T-cell (primary cell): ENCODE measurements at regions of chr9 and their contacts with region 1.

Region 1: GRCh38 chr9:117644133-117644931 is 59.9 kb upstream of the TLR4 start:
- DNase-seq: peak in 32 of 35 experiments; percentile 1 to 55 (median 26)
- ATAC-seq: peak in 1 of 4 experiments; percentile 30
- H3K4me3 ChIP-seq: peak overlapping the region in 1 of 2 donors; percentile 3
- H3K4me3 Mint-ChIP-seq: peak overlapping the region in 1 of 3 donors; percentile 34
- H3K27ac ChIP-seq: no peak overlapping the region
- H3K27ac Mint-ChIP-seq: no peak overlapping the region
- H3K4me1 ChIP-seq: peaks cover 0 to 6% of the 10 kb centered on the region in 2 experiments
- H3K4me1 Mint-ChIP-seq: peaks cover 5 to 10% (median 9%) of the 10 kb centered on the region in 3 donors
- H3K27me3 ChIP-seq: peaks cover 5 to 9% of the 10 kb centered on the region in 2 experiments
- H3K27me3 Mint-ChIP-seq: peaks cover 18 to 42% of the 10 kb centered on the region in 2 donors

Region 2: DNA sequence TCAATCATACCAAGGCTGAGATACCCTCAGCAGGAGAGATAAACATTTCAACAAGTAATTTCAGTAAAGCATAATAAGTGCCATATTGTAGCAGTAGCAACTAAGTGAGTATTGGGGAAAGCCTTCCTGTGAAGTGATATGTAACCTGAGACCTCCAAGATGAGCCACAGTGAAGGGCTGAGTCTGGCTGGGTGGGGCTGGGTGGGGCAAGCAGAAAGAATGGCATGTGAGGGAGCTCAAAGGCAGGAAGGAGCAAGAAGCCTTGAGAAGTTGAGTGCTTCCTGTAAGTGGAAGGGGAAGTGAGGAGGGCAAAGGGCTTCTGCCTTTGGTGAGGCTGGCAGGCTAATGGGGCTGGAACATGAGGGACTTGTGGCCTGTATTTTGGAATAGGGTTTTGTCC is 209.8 kb before region 1 on chr9:
- CTCF ChIA-PET with region 1: no interaction called
- POLR2A ChIA-PET with region 1: no interaction called
- DNase-seq: no peak
- ATAC-seq: no peak
- H3K4me3 ChIP-seq: no peak overlapping the region
- H3K4me3 Mint-ChIP-seq: no peak overlapping the region
- H3K27ac ChIP-seq: no peak overlapping the region
- H3K27ac Mint-ChIP-seq: no peak overlapping the region
- H3K4me1 ChIP-seq: no peaks in the 10 kb centered on the region
- H3K4me1 Mint-ChIP-seq: no peaks in the 10 kb centered on the region
- H3K27me3 ChIP-seq: no peaks in the 10 kb centered on the region
- H3K27me3 Mint-ChIP-seq: peaks cover 2 to 5% of the 10 kb centered on the region in 2 donors

Region 3: GRCh38 chr9:117678871-117679270 is 34.5 kb after region 1 on chr9:
- CTCF ChIA-PET with region 1: no interaction called
- POLR2A ChIA-PET with region 1: no interaction called
- DNase-seq: no peak
- ATAC-seq: no peak
- H3K4me3 ChIP-seq: no peak overlapping the region
- H3K4me3 Mint-ChIP-seq: no peak overlapping the region
- H3K27ac ChIP-seq: no peak overlapping the region
- H3K27ac Mint-ChIP-seq: no peak overlapping the region
- H3K4me1 ChIP-seq: no peaks in the 10 kb centered on the region
- H3K4me1 Mint-ChIP-seq: peaks cover 0 to 3% (median 2%) of the 10 kb centered on the region in 3 donors
- H3K27me3 ChIP-seq: no peaks in the 10 kb centered on the region
- H3K27me3 Mint-ChIP-seq: no peaks in the 10 kb centered on the region

Region 4: DNA sequence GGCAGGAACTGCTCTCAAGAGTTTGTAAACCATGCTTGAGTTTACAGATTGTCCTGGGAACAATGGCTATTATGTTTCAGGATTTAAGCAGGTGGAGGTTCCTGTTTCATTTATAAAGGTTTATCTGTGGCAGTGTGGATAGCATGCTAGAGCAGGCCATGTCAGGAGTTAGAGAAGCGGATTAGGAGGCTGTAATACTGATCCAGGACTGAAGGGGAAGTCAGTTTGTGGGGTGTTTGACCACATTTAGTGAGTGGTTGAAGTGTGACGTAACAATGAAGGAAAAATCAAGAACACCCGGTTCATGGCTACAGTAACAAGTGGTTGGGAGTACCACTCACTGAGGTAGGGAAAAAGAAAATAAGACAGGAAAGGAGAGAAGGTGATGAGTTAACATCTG is 358.9 kb after region 1 on chr9:
- CTCF ChIA-PET with region 1: no interaction called
- POLR2A ChIA-PET with region 1: no interaction called
- DNase-seq: no peak
- ATAC-seq: no peak
- H3K4me3 ChIP-seq: no peak overlapping the region
- H3K4me3 Mint-ChIP-seq: no peak overlapping the region
- H3K27ac ChIP-seq: no peak overlapping the region
- H3K27ac Mint-ChIP-seq: no peak overlapping the region
- H3K4me1 ChIP-seq: no peaks in the 10 kb centered on the region
- H3K4me1 Mint-ChIP-seq: no peaks in the 10 kb centered on the region
- H3K27me3 ChIP-seq: no peaks in the 10 kb centered on the region
- H3K27me3 Mint-ChIP-seq: peaks cover 1 to 3% of the 10 kb centered on the region in 2 donors

Region 5: DNA sequence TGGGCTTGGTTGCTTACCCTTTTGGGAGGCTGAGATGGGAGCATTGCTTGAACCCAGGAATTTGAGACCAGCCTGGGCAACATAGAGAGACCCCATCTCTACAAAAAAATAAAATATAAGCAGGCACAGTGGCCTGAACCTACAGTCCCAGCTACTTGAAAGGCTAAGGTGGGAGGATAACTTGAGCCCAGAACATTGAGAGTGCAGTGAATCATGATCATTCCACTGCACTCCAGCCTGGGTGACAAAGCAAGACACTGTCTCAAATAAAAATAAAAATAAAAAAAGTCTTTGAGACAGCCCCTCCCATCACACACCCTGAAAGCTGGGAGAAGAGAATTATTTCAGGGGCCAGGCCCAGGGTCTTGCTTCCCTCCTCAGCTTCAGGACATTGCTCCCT is 1473.1 kb after region 1 on chr9:
- CTCF ChIA-PET with region 1: no interaction called
- POLR2A ChIA-PET with region 1: no interaction called
- DNase-seq: no peak
- ATAC-seq: no peak
- H3K4me3 ChIP-seq: no peak overlapping the region
- H3K4me3 Mint-ChIP-seq: no peak overlapping the region
- H3K27ac ChIP-seq: no peak overlapping the region
- H3K27ac Mint-ChIP-seq: no peak overlapping the region
- H3K4me1 ChIP-seq: no peaks in the 10 kb centered on the region
- H3K4me1 Mint-ChIP-seq: no peaks in the 10 kb centered on the region
- H3K27me3 ChIP-seq: no peaks in the 10 kb centered on the region
- H3K27me3 Mint-ChIP-seq: no peaks in the 10 kb centered on the region

Region 6: DNA sequence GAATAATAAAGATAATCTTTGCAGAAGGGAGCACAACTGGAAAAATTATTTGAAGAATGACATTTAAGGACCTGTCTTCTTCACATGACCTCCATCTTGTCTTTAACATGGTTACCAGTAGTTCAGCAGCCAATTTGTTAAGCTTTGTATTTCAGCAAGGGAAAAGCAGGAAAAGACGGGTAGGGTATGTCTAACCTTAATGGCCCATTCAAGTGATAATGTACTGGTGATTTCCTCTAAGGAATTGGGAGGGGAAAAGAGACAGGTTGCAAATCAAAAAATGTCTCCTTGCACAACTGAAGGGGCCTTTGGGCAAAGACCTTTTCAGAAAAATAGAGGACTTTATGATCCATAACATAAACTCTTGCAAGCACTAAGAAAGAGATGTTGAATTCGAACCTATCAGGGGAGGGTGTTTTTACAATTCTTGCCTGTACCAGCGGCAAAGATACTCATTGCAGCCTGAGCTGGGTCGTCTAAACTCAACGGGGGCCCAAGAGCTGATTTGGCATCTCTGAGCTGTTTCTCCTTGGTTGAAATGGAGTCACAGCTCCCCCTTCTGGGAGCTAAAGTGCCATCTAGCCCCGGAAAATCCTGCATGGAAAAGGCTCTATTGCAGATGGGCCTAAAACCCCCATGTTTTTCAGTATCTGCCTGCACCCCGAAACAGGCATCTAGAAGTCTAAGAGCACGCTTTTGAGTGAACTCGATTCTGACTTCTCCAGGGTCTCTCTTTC is 1721.1 kb after region 1 on chr9:
- CTCF ChIA-PET with region 1: interaction called in 1 of 2 experiments, 13 read pairs
- POLR2A ChIA-PET with region 1: no interaction called
- DNase-seq: peak in 1 of 35 experiments; percentile 2
- ATAC-seq: no peak
- H3K4me3 ChIP-seq: no peak overlapping the region
- H3K4me3 Mint-ChIP-seq: no peak overlapping the region
- H3K27ac ChIP-seq: no peak overlapping the region
- H3K27ac Mint-ChIP-seq: no peak overlapping the region
- H3K4me1 ChIP-seq: no peaks in the 10 kb centered on the region
- H3K4me1 Mint-ChIP-seq: no peaks in the 10 kb centered on the region
- H3K27me3 ChIP-seq: peaks cover 6 to 29% of the 10 kb centered on the region in 2 experiments
- H3K27me3 Mint-ChIP-seq: peaks cover 27 to 28% of the 10 kb centered on the region in 2 donors